ENCODE measurements at regions of chr17 and their contacts with region 1.

Region 1: GRCh38 chr17:67836205-67836987 is 11.1 kb downstream of the BPTF start:
- DNase-seq: peak; percentile 77
- ATAC-seq: peak; percentile 81
- H3K4me3 ChIP-seq: no peak overlapping the region
- H3K27ac ChIP-seq: peak overlapping the region; percentile 13; the same call in 1 of the 2 replicates
- H3K4me1 ChIP-seq: peaks cover 7% of the 10 kb centered on the region
- H3K27me3 ChIP-seq: no peaks in the 10 kb centered on the region
- CTCF ChIP-seq: no peak
- POLR2A ChIP-seq: no peak
- RAD21 ChIP-seq: no peak

Region 2: GRCh38 chr17:67879662-67880061 is 43.3 kb after region 1 on chr17:
- CTCF ChIA-PET with region 1: no interaction called
- POLR2A ChIA-PET with region 1: no interaction called
- dilution Hi-C with region 1: no loop called
- in situ Hi-C with region 1: no loop called
- intact Hi-C with region 1: loop called (anchors 5 kb)
- DNase-seq: no peak
- ATAC-seq: no peak
- H3K4me3 ChIP-seq: no peak overlapping the region
- H3K27ac ChIP-seq: no peak overlapping the region
- H3K4me1 ChIP-seq: no peaks in the 10 kb centered on the region
- H3K27me3 ChIP-seq: no peaks in the 10 kb centered on the region
- CTCF ChIP-seq: no peak
- POLR2A ChIP-seq: no peak
- RAD21 ChIP-seq: no peak

Measured in IMR-90 (cell line).